Cardiac septum (tissue), 1 donor: ENCODE measurements at regions of chr21 and their contacts with region 1.

Region 1: DNA sequence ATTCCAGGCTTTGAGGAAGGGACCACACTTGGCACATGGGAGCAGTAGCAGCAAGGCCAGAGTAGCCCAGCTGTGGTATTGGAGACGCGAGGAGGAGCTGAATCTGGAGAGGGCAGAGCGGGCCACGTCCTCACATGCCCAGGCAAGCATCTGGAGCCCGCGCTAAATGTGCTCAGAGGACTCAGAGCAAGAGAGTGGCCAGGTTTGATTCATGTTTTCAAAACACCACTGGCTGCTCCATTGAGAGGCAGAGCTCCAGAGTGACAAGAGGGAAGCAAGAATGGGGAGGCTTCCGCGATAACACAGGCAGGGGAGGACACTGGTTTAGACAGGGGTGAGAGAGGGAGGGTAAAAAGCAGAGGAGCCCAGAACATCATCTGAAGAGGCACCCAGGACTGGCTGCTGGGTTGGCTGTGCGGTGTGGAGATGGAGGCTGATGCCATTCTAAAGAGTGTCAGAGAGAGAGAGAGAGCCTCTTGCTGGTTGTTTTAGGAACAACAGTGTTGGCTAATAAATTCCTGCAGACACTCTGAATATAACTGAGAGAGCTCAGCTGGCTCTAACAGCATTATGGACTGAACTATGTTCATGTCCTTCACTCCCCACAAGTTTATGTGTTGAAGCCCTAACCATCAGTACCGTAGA is 32.3 kb downstream of the RCAN1 start:
- DNase-seq: no peak

Region 2: GRCh38 chr21:34510148-34511142 is 72.2 kb before region 1 on chr21:
- intact Hi-C with region 1: loop called (anchors 1 kb)
- DNase-seq: peak; percentile 94

Region 3: GRCh38 chr21:34526618-34527290 is 55.9 kb before region 1 on chr21:
- intact Hi-C with region 1: loop called (anchors 2 kb)
- DNase-seq: peak; percentile 88